Endothelial cell of umbilical vein (primary cell): ENCODE measurements at regions of chr13 and their contacts with region 1.

Region 1: DNA sequence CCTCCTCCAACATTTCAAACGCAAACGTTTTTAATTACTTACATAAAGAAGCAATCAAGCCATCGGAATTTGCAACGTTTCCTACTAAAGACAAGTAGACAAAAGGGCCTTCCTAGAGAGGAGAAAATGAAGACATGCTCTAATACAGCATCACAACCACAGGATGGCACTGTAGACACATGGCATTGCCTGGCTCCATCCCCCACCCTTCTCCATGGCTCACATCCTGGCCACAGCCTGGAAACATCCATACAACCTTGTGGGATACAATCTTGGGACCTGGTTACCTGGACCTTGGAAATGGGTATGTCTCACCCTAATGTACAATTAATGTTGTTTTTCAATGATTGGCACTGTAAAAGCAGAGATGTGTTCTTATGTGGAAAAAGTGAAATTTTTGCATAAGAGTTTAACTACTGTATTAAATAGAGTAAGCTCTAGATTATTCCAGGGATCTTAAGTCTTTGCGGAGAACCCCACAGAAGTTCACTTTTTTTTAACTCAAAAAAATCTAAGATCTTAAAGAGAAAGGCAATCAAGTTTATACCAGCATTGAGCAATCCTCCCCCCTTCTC is 21.5 kb downstream of the EBPL start:
- DNase-seq: peak; percentile 86
- H3K4me3 ChIP-seq: no peak overlapping the region
- H3K27ac ChIP-seq: no peak overlapping the region
- H3K4me1 ChIP-seq: peaks cover 11% of the 10 kb centered on the region
- H3K27me3 ChIP-seq: no peaks in the 10 kb centered on the region
- CTCF ChIP-seq: peak; percentile 60 to 75
- POLR2A ChIP-seq: no peak

Region 2: DNA sequence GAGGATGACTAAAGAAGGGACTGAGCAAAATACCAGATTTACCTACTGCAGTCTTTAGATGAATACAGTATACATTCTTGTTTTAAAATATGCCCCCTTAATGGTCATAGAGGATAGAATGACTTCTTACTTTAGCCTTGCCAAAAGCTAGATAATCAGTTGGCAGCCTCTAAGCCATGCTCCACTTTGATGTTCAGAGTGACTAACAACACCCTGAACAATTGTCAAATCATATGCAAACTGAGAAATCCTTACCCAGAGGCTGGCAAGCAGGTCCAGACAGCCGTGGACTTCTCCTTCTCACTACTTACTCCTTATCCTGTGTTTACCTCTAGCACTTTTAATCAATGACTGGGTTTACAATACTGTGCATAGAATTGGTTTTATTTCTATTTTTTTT is 197.6 kb before region 1 on chr13:
- CTCF ChIA-PET with region 1: no interaction called
- POLR2A ChIA-PET with region 1: no interaction called
- dilution Hi-C with region 1: no loop called
- intact Hi-C with region 1: no loop called
- DNase-seq: no peak
- H3K4me3 ChIP-seq: no peak overlapping the region
- H3K27ac ChIP-seq: no peak overlapping the region
- H3K4me1 ChIP-seq: no peaks in the 10 kb centered on the region
- H3K27me3 ChIP-seq: no peaks in the 10 kb centered on the region
- CTCF ChIP-seq: no peak
- POLR2A ChIP-seq: no peak

Region 3: DNA sequence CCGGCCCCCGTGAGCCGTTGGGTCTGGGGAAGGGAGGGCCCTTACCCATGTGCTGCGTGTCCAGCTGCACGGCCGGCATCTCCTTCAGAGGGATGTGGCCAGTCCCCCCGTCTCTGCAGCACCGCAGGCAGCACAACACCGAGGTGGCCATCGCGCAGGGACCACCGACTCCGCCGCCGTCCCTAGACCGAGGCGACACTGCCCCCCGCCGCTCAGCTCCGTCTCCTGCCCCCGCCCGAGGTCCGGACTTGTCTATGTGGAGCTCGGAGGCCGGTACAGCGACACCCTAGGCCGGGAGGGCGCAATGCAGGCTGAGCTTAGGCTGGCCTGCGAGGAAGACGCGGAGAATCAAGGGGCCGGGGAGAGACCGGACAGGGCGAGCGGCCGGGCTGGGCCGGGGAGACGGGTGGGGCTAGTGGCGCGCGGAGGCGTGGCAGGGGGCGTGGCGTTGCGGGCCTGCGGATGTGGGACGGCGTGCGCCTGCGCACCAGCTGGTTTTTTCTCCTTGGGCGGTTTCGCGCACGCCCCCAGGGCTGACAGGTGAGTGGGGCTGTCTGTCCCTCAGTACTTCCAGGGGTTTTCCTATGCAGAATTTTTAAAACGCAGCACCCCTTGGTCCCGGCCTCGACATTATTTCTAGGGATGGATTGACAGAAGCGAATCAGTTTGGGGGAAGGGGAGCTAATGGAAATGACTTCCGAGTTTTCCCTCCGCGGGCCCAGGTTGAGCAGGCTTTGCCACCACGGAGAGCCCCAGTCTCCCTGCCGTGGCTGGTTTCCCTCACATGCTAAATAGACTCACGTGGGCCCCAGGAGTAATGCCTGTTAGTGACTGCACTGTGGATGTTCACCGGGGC is 266.5 kb after region 1 on chr13 and contains the start of gene SPRYD7:
- CTCF ChIA-PET with region 1: interaction called, 3 read pairs
- POLR2A ChIA-PET with region 1: no interaction called
- dilution Hi-C with region 1: no loop called
- intact Hi-C with region 1: loop called (anchors 5 kb)
- DNase-seq: peak; percentile 99
- H3K4me3 ChIP-seq: peak within 1 kb of the TSS; percentile 69 to 82 (median 79)
- H3K27ac ChIP-seq: peak within 1 kb of the TSS; percentile 21
- H3K4me1 ChIP-seq: peaks cover 8% of the 10 kb centered on the region
- H3K27me3 ChIP-seq: no peaks in the 10 kb centered on the region
- CTCF ChIP-seq: peak; percentile 90 to 95
- POLR2A ChIP-seq: peak; percentile 70
- total RNA-seq, gene SPRYD7: 7.0 and 7.5 TPM in 2 replicates

Region 4: GRCh38 chr13:50801087-50801931 is 1131.5 kb after region 1 on chr13:
- CTCF ChIA-PET with region 1: interaction called, 5 read pairs
- POLR2A ChIA-PET with region 1: no interaction called
- dilution Hi-C with region 1: no loop called
- intact Hi-C with region 1: loop called (anchors 2 kb)
- DNase-seq: peak; percentile 75
- H3K4me3 ChIP-seq: no peak overlapping the region
- H3K27ac ChIP-seq: no peak overlapping the region
- H3K4me1 ChIP-seq: peaks cover 4% of the 10 kb centered on the region
- H3K27me3 ChIP-seq: no peaks in the 10 kb centered on the region
- CTCF ChIP-seq: peak; percentile 71 to 72
- POLR2A ChIP-seq: no peak

Region 5: DNA sequence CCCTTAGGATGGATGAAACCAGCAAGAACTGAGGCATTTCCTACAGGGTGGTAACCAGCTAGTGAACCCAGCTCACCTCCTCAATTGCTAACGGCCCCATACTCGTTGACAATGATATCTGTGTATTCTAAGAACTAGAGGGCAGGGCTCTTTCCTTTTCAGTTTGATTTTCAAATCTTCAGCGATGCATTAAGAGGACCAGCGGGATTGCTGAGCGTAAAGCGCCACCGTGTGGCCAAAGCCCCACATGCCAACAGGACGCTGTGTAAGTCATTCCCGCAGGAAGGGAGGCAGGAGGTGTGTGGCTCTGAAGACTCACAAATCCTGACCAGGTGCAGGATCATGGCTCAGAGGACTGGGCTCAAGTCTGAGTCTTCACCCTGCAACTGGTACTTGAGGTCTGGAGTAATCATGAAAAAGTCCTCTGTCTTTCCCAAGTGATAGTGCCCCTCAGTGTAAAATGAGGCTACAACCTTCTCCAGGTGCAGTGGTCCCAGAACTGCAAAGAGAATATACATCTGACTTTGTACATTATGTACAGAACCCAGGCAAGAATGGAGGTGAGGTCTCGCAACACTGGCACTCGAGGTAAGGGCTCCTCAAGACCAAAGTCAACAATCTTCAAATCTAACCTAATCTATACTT is 1400.3 kb after region 1 on chr13:
- CTCF ChIA-PET with region 1: no interaction called
- POLR2A ChIA-PET with region 1: no interaction called
- dilution Hi-C with region 1: no loop called
- intact Hi-C with region 1: loop called (anchors 5 kb)
- DNase-seq: peak; percentile 76
- H3K4me3 ChIP-seq: no peak overlapping the region
- H3K27ac ChIP-seq: no peak overlapping the region
- H3K4me1 ChIP-seq: peaks cover 11% of the 10 kb centered on the region
- H3K27me3 ChIP-seq: peaks cover 3 to 9% of the 10 kb centered on the region in 2 experiments
- CTCF ChIP-seq: peak; percentile 92 to 94
- POLR2A ChIP-seq: no peak